ENCODE measurements at regions of chr3 and their contacts with region 1.

Region 1: GRCh38 chr3:51099794-51100535 is 285.1 kb upstream of the MANF start:
- DNase-seq: peak in 5 of 6 donors; percentile 38 to 64 (median 48)
- ATAC-seq: peak; percentile 80 to 98 (median 92)
- H3K4me3 ChIP-seq: no peak overlapping the region
- H3K27ac ChIP-seq: no peak overlapping the region
- H3K4me1 ChIP-seq: no peaks in the 10 kb centered on the region
- H3K27me3 ChIP-seq: no peaks in the 10 kb centered on the region
- CTCF ChIP-seq: peak; percentile 30 to 60 (median 52)

Region 2: DNA sequence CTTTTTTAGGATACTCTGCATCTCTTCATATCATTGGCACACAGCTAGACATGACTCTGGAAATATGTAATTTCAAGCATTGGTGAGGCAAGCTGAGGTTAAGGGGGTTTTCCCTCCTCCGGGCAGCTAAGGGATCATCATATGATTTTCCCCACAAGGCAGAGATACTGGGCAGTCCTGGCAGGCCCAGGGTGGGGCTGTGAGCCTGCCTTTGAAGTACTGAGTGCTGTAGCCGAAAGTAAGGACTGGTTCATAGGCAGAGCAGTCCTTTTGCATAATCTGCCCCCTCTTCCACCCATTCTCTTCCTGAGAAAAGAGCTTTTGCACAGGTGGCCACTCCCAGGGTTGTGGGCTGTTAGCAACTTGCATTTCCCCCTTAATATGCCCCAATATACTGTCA is 116.3 kb after region 1 on chr3:
- intact Hi-C with region 1: no loop called
- DNase-seq: no peak
- ATAC-seq: no peak
- H3K4me3 ChIP-seq: no peak overlapping the region
- H3K27ac ChIP-seq: no peak overlapping the region
- H3K4me1 ChIP-seq: no peaks in the 10 kb centered on the region
- H3K27me3 ChIP-seq: no peaks in the 10 kb centered on the region
- CTCF ChIP-seq: no peak

Region 3: DNA sequence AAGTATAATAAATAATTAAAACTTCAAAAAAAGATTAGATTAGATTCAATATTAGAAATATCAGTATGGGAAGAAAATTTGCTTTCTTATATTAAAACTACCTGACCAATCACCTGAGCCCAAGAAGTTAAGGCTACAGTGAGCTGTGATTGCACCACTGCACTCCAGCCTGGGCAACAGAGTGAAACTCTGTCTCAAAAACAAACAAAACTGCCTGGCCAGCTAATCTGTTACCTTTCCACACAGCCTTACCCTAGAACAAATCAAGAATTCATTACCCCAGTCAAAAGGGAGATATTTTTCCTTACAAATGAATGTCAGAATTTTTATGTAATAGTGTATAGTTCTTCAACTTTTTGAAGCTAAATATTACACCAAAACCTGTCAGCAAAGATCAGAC is 168.2 kb after region 1 on chr3:
- intact Hi-C with region 1: no loop called
- DNase-seq: no peak
- ATAC-seq: no peak
- H3K4me3 ChIP-seq: no peak overlapping the region
- H3K27ac ChIP-seq: no peak overlapping the region
- H3K4me1 ChIP-seq: no peaks in the 10 kb centered on the region
- H3K27me3 ChIP-seq: no peaks in the 10 kb centered on the region
- CTCF ChIP-seq: no peak

Region 4: DNA sequence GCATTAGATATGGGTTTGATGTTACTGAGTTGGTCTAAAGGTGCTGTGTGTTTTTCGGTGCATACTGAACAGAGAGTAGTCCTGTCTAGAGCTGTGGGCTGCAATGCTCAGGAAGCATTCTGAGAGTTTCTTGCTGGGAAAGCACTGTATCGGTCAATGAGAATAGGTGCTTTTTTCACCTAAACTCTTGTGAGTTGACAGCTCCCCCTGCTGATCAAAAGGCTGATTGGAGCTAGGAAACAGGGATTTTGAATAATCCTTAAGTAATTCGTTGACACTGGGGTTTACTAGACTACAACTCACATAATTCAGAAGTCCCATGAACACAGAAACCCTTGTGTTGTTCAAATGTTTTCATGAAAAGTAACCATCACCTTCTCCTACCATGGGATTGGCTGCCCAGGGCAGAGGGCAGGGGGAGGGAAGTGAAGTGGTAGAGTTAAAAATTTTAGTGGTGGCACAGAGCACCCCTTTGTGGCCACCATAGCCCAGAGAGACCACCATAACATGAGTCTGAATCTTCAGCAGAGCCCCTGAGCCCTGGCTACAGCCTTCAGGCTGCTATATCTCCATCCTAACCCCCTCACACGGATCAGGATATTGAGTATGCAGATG is 272.1 kb after region 1 on chr3:
- intact Hi-C with region 1: loop called in 1 of 3 experiments (anchors 10 kb)
- DNase-seq: peak in 3 of 6 donors; percentile 32 to 65 (median 52)
- ATAC-seq: peak in 3 of 4 donors; percentile 85 to 92 (median 90)
- H3K4me3 ChIP-seq: no peak overlapping the region
- H3K27ac ChIP-seq: no peak overlapping the region
- H3K4me1 ChIP-seq: no peaks in the 10 kb centered on the region
- H3K27me3 ChIP-seq: no peaks in the 10 kb centered on the region
- CTCF ChIP-seq: peak in 3 of 4 donors; percentile 42 to 59 (median 58)

Measured in pancreas (tissue), 10 donors.